ENCODE measurements at regions of chr6 and their contacts with region 1.

Region 1: GRCh38 chr6:144215932-144216667 is 65.8 kb downstream of the STX11 start:
- DNase-seq: peak; percentile 91
- H3K4me3 ChIP-seq: peak overlapping the region; percentile 66
- CTCF ChIP-seq: peak; percentile 84

Region 2: GRCh38 chr6:144023216-144023615 is 192.9 kb before region 1 on chr6:
- CTCF ChIA-PET with region 1: no interaction called
- POLR2A ChIA-PET with region 1: no interaction called
- DNase-seq: no peak
- H3K4me3 ChIP-seq: no peak overlapping the region
- CTCF ChIP-seq: no peak

Region 3: GRCh38 chr6:144049386-144049785 is 166.7 kb before region 1 on chr6:
- CTCF ChIA-PET with region 1: no interaction called
- POLR2A ChIA-PET with region 1: no interaction called
- DNase-seq: no peak
- H3K4me3 ChIP-seq: no peak overlapping the region
- CTCF ChIP-seq: no peak

Region 4: DNA sequence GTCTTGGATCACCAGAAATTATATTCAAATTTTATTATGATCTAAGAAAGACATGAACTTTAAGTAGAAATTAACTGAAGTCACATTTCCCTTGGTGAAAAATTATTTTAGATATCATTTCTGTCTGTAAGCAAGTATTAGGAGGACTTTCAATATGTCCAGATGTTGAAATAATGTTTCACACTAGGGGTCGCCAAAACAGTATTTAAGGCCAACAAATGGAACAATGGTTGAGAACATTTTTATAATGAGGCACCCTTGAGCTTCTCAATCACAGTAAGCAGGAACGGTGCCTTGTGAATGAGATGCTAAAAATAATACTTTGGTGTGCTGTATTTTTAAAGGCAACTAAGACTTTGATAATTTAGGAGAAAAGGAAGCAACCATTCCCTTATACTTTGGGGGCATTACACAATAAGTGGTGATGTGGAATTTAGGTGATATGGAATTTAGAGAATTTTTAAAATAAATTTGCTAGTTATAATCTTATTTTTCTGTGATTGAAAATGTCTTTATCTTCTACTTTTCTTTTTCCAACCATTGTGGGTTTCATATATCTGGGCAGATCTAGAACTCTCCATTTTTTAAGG is 111.1 kb before region 1 on chr6:
- CTCF ChIA-PET with region 1: interaction called, 19 read pairs
- POLR2A ChIA-PET with region 1: interaction called, 3 read pairs
- DNase-seq: peak; percentile 36
- H3K4me3 ChIP-seq: no peak overlapping the region
- CTCF ChIP-seq: peak; percentile 51

Region 5: GRCh38 chr6:144202879-144203468 is 13.1 kb before region 1 on chr6:
- CTCF ChIA-PET with region 1: interaction called, 10 read pairs
- POLR2A ChIA-PET with region 1: no interaction called
- DNase-seq: no peak
- H3K4me3 ChIP-seq: no peak overlapping the region
- CTCF ChIP-seq: no peak

Region 6: GRCh38 chr6:144232176-144232831 is 16.2 kb after region 1 on chr6:
- CTCF ChIA-PET with region 1: interaction called, 19 read pairs
- POLR2A ChIA-PET with region 1: no interaction called
- DNase-seq: no peak
- H3K4me3 ChIP-seq: no peak overlapping the region
- CTCF ChIP-seq: no peak

Region 7: GRCh38 chr6:144244688-144245087 is 28.6 kb after region 1 on chr6:
- CTCF ChIA-PET with region 1: interaction called, 15 read pairs
- POLR2A ChIA-PET with region 1: interaction called, 3 read pairs
- DNase-seq: no peak
- H3K4me3 ChIP-seq: no peak overlapping the region
- CTCF ChIP-seq: no peak

Region 8: DNA sequence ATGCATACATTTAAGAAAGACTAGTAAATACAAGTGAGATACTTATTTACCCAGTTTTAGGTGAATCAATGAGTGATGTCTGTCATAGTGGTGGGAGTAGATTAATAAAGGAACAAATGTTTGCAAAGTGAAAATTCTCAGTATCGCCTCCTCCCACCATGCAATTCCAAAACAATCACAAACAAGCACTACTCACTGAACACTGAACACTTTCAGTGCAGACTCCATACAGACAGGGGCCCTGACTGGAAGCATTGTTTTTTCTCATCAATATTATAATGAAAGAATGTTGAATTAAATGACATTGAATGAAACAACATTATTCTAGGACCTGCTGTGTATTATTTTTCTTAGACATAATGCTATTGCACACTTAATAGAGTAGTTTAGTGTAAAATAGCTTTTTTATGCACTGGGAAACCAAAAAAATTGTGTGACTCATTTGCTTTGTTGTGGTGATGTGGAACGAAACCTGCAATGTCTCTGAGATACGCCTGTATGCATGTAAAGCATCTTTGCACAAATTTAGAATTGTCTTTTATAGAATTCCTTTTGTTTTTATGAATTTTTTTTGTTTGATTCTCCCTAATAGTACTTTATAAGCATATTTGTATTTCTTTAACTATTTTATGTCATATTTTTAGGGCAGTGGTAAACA is 386.6 kb after region 1 on chr6:
- CTCF ChIA-PET with region 1: no interaction called
- POLR2A ChIA-PET with region 1: no interaction called
- DNase-seq: no peak
- H3K4me3 ChIP-seq: no peak overlapping the region
- CTCF ChIP-seq: no peak